Aorta (tissue), 5 donors: ENCODE measurements at regions of chr13 and their contacts with region 1.

Region 1: DNA sequence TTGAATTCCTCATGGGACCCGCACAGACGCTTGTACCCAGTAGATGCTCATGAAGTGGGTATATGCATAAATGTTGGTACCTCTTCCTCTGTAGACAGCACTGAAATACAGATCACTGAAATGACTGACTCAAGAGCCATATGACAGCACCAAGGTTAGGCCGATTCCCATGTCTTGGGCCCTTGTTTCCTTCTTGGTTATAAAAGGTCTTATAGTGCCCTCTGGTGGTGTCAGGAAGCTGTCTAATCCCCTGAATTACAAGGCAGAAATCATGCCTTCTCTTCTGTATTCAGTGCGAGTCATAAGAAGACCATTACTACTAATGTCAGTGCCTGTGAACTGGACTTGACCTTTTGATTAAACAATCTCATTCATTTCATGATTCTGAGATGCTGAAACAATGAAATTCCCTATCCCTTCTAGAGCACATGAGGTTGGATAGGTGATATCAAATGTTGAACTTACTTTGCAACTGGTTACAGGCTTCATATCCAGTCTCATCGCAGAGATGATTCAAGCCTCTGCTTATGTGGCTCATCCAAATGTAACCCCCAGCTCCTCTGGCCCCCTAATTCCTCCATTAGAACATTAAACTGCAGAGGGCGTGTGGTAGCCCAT is 59.7 kb downstream of the SPATA13 start:
- DNase-seq: no peak
- ATAC-seq: peak; percentile 85
- H3K4me3 ChIP-seq: no peak overlapping the region
- H3K27ac ChIP-seq: no peak overlapping the region
- H3K4me1 ChIP-seq: no peaks in the 10 kb centered on the region
- H3K27me3 ChIP-seq: no peaks in the 10 kb centered on the region

Region 2: GRCh38 chr13:23921451-23921888 is 298.7 kb before region 1 on chr13:
- intact Hi-C with region 1: loop called (anchors 5 to 10 kb)
- DNase-seq: no peak
- ATAC-seq: no peak
- H3K4me3 ChIP-seq: no peak overlapping the region
- H3K27ac ChIP-seq: no peak overlapping the region
- H3K4me1 ChIP-seq: no peaks in the 10 kb centered on the region
- H3K27me3 ChIP-seq: no peaks in the 10 kb centered on the region

Region 3: DNA sequence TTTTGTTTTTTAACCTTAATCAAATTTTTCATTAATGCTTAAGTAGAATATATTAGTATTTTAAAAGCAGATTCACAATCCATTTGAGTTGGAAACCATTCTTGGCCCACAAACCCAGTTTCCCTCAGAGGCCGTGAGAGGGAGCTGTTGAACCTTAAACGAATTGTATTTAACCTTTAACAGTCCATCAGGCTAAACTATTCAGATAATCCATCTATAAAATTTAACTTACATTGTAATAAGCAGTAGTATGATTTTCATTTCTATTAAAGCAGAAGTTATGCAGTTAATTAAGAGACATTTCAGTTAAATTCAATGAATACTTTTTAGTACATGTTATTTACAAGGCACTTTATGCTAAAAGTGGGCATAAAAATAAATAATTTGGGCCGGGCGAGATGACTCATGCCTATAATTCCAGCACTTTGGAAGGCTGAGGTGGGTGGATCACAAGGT is 199.8 kb before region 1 on chr13:
- intact Hi-C with region 1: loop called (anchors 1 to 2 kb)
- DNase-seq: no peak
- ATAC-seq: peak; percentile 73
- H3K4me3 ChIP-seq: no peak overlapping the region
- H3K27ac ChIP-seq: no peak overlapping the region
- H3K4me1 ChIP-seq: no peaks in the 10 kb centered on the region
- H3K27me3 ChIP-seq: no peaks in the 10 kb centered on the region

Region 4: DNA sequence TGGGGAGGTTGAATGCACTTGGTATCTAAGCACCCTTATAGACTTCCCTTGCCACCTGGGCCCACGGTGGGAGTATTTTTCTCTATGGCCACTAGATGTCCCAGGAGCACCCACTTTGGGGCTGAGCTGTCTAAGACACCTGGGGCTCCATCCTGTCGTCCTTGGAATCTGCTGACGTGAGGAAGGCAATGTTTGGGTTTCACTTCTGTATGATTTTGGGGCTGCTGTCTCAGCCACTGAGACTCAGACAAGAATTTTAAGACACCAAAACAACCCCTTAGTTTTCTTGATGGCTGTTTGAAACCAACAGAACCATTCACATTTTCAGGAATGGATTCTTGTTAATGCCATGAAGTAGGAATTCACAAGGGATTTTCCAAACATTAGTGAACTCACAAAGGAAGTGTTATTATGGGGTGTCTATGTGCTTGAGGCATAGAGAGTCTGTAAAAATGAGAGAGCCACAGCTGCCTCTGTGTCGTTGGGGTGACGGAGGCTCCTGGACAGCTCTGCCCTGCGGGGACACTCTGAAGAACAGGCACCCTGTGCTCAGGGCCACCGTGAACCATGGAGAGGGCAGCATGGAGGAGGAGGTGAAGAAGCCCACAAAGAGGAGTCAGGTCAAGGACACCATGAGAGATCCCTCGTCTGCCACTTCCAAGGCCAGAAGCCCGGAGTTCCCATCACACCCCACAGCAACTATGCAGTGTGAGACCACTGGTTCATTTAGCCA is 166.5 kb before region 1 on chr13:
- intact Hi-C with region 1: loop called in 1 of 2 experiments (anchors 10 kb)
- DNase-seq: no peak
- ATAC-seq: peak; percentile 65
- H3K4me3 ChIP-seq: no peak overlapping the region
- H3K27ac ChIP-seq: peak overlapping the region; percentile 81 to 89
- H3K4me1 ChIP-seq: peaks cover 0 to 2% of the 10 kb centered on the region in 2 donors
- H3K27me3 ChIP-seq: no peaks in the 10 kb centered on the region

Region 5: GRCh38 chr13:24065176-24065575 is 155.0 kb before region 1 on chr13:
- intact Hi-C with region 1: no loop called
- DNase-seq: no peak
- ATAC-seq: no peak
- H3K4me3 ChIP-seq: no peak overlapping the region
- H3K27ac ChIP-seq: no peak overlapping the region
- H3K4me1 ChIP-seq: no peaks in the 10 kb centered on the region
- H3K27me3 ChIP-seq: no peaks in the 10 kb centered on the region

Region 6: GRCh38 chr13:24323036-24323738 is 103.0 kb after region 1 on chr13:
- intact Hi-C with region 1: no loop called
- DNase-seq: no peak
- ATAC-seq: no peak
- H3K4me3 ChIP-seq: no peak overlapping the region
- H3K27ac ChIP-seq: no peak overlapping the region
- H3K4me1 ChIP-seq: no peaks in the 10 kb centered on the region
- H3K27me3 ChIP-seq: no peaks in the 10 kb centered on the region